Dorsolateral prefrontal cortex (tissue), 120 donors: ENCODE measurements at regions of chr2 and their contacts with region 1.

Region 1: DNA sequence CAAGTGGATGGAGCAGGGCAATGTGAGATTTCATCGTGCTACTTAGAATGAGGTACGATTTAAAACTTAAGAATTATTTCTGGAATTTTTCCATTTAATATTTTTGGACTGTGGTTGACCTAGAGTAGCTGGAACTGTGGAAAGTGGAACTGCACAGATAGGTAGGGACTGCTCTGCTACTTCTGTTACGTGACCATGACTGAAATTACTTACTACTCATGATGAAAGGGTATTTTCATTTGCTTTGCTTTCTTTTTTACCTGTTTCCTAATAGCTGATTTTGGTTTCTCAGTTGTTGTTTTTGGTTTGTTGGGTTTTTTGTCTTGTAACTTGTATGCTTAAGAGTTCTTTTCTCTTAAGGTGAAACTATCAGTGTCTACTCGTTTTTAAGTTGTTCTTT is 11.4 kb downstream of the UBE2E3 start:
- DNase-seq: no peak
- H3K4me3 ChIP-seq: no peak overlapping the region
- H3K27ac ChIP-seq: no peak overlapping the region
- H3K27me3 ChIP-seq: no peaks in the 10 kb centered on the region
- CTCF ChIP-seq: no peak

Region 2: GRCh38 chr2:180933332-180933731 is 58.5 kb before region 1 on chr2:
- intact Hi-C with region 1: no loop called
- DNase-seq: no peak
- H3K4me3 ChIP-seq: no peak overlapping the region
- H3K27ac ChIP-seq: no peak overlapping the region
- H3K27me3 ChIP-seq: no peaks in the 10 kb centered on the region
- CTCF ChIP-seq: no peak

Region 3: DNA sequence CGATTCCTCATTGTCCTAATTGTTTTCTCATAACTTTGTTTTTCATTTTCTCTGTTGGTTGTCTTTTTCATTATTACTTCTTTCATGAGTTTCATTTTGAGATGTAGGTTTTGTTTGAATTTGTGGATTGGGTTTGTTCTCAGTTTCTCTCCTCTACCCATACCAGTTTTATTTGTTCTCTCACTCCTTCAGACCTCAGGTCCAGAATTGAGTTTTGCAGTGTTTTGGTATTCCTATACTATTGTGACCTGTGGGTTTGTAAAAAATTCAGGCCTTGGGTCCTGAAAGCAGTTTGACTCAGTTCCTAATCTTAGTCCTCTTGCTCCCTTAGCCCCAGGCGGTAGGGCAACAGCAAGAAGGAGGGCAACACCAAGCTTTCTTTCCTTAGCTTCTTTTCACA is 39.7 kb before region 1 on chr2:
- intact Hi-C with region 1: no loop called
- DNase-seq: no peak
- H3K4me3 ChIP-seq: no peak overlapping the region
- H3K27ac ChIP-seq: no peak overlapping the region
- H3K27me3 ChIP-seq: no peaks in the 10 kb centered on the region
- CTCF ChIP-seq: no peak

Region 4: DNA sequence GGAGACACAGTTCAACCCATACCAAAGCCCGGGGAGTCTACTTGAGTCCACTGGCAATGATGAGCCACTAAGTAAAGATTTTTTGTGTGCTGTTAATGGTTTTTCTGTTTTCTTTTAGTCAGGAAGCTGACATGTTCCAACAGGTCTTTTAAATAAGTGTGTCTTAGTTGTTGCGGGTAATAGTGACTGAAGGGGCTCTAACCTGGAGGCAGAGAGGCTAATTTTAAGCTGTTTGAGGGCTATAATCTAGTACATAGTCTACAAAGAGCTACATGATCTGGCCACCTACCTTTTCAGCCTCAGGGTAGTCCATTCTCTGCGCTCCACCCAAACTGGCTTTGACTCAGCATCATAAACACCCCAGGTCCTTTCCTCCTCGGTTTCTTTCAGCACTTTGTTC is 29.0 kb before region 1 on chr2:
- intact Hi-C with region 1: no loop called
- DNase-seq: no peak
- H3K4me3 ChIP-seq: no peak overlapping the region
- H3K27ac ChIP-seq: no peak overlapping the region
- H3K27me3 ChIP-seq: peaks cover 0 to 4% (median 0%) of the 10 kb centered on the region in 45 donors
- CTCF ChIP-seq: no peak

Region 5: GRCh38 chr2:181052523-181052891 is 60.7 kb after region 1 on chr2:
- intact Hi-C with region 1: loop called in 1 of 2 experiments (anchors 5 kb)
- DNase-seq: no peak
- H3K4me3 ChIP-seq: no peak overlapping the region
- H3K27ac ChIP-seq: no peak overlapping the region
- H3K27me3 ChIP-seq: no peaks in the 10 kb centered on the region
- CTCF ChIP-seq: no peak

Region 6: DNA sequence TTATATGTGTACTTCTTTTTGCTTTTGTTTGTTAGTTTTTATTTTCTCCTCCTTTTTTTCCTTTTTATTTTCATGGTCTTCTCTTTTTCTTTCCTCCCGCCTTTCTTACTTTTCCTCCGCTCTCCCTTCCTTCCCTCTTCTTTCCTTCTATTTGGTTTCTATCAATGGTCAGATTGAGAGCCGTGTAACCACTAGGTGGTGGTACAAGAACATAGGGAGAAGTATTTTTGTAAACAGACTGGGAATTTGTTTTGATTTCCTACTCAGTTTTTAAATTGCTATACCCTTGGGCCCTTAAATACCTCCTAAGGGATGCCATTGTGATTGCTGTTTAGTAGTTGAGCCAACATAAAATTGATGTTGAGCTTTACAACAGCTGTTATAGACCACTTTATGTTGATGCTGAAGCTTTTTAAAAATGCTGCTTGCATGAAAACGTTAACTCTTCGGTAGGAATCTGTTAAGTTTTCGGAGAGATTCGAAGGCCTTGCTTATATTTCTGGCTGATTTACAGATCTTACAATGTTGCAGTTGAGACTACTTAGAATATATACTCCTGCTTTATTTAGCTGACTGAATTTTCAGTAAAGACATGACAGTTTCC is 112.8 kb after region 1 on chr2:
- intact Hi-C with region 1: no loop called
- DNase-seq: peak in 1 of 10 donors; percentile 5
- H3K4me3 ChIP-seq: no peak overlapping the region
- H3K27ac ChIP-seq: peak overlapping the region in 1 of 59 donors; percentile 25
- H3K27me3 ChIP-seq: no peaks in the 10 kb centered on the region
- CTCF ChIP-seq: peak; percentile 33 to 83 (median 66)